Activated naive CD4-positive, alpha-beta T cell treated with anti-CD3 and anti-CD28 coated beads for 36 hours (primary cell): ENCODE measurements at regions of chr9 and their contacts with region 1.

Region 1: GRCh38 chr9:72364679-72365524 is at the start of gene ZFAND5:
- DNase-seq: peak; percentile 94
- H3K4me3 Mint-ChIP-seq: peak within 1 kb of the TSS; percentile 82
- H3K27ac Mint-ChIP-seq: peak within 1 kb of the TSS; percentile 95
- H3K4me1 Mint-ChIP-seq: peaks cover 31% of the 10 kb centered on the region
- H3K27me3 Mint-ChIP-seq: no peaks in the 10 kb centered on the region
- total RNA-seq, gene ZFAND5: 71.9 to 73.2 TPM

Region 2: GRCh38 chr9:71795097-71795813 is 569.6 kb before region 1 on chr9:
- CTCF ChIA-PET with region 1: no interaction called
- intact Hi-C with region 1: loop called (anchors 2 kb)
- DNase-seq: no peak
- H3K4me3 Mint-ChIP-seq: no peak overlapping the region
- H3K27ac Mint-ChIP-seq: peak overlapping the region; percentile 72
- H3K4me1 Mint-ChIP-seq: peaks cover 61% of the 10 kb centered on the region
- H3K27me3 Mint-ChIP-seq: no peaks in the 10 kb centered on the region

Region 3: DNA sequence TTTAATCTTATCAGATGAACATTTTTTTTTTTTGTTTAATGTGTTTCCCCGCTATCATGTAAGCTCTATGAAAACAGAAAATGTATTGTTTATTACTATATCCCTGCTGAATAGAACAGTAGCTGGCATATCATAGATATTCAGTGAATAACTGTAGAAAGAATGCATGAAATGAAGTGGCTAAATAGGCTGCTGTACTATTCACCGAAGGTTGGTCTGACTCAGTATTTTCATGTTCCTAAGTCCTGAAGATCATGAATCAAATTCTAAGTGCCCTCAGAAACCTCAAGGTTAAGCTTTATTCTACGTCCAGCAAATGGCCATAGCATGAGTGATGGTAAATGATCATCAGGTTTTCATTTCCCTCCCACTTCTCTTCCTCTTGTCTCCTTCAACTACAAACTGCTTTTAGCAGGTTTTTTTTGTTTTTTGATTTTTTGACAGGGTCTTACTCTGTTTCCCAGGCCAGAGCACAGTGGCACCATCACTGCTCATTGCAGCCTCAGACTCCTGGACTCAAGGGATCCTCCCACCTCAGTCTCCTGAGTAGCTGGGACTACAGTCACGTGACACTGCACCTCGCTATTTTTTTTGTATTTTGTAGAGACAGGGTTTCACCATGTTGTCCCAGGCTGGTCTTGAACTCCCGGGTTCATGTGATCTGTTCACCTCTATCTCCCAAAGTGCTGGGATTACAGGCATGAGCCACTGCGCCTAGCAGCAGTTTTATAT is 19.2 kb after region 1 on chr9:
- CTCF ChIA-PET with region 1: no interaction called
- intact Hi-C with region 1: loop called (anchors 1 kb)
- DNase-seq: no peak
- H3K4me3 Mint-ChIP-seq: no peak overlapping the region
- H3K27ac Mint-ChIP-seq: no peak overlapping the region
- H3K4me1 Mint-ChIP-seq: peaks cover 6% of the 10 kb centered on the region
- H3K27me3 Mint-ChIP-seq: no peaks in the 10 kb centered on the region

Region 4: GRCh38 chr9:72473474-72474261 is 108.8 kb after region 1 on chr9:
- CTCF ChIA-PET with region 1: no interaction called
- intact Hi-C with region 1: loop called (anchors 1 kb)
- DNase-seq: no peak
- H3K4me3 Mint-ChIP-seq: no peak overlapping the region
- H3K27ac Mint-ChIP-seq: peak overlapping the region; percentile 84
- H3K4me1 Mint-ChIP-seq: peaks cover 42% of the 10 kb centered on the region
- H3K27me3 Mint-ChIP-seq: no peaks in the 10 kb centered on the region

Region 5: DNA sequence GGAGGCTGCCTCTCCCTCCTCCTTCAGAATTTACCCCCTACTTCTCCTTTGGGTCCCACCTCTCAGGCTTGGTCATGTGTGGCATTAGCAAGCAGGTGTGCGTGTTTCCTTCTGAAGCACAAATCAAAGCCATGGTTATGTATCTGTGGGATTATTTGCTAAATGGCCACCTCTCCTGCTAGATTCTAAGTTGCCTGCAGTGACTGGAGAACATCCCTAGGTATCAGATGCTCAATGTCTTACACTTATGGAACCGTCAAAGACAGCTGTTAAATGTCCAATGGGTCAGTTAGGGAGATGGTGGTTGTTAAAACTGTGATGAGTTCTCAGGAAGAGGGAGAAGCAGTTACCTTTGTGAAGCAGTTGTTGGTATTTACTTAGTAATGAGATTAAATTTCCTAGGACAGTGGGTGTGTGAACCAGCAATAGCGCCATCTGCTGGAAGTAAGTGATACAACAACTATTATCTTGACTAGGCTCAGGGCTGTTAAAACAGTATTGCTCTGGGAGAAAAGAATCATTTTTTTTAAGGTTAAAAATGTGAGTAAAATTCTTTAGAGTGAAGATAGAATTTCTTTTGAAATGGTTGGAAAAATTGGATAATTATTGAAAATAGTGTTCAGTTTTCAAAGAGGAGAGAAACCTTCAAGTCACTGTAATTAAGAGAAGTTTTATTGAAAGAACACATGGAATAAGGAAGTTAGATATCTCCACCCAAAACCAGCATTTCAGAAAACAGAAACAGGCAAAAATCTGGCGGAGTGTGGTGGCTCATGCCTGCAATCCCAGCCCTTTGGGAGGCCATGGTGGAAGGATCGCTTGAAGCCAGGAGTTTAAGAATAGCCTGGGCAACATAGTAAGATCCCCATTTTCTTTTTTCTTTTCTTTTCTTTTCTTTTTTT is 227.9 kb after region 1 on chr9:
- CTCF ChIA-PET with region 1: interaction called, 3 read pairs
- intact Hi-C with region 1: loop called (anchors 1 kb)
- DNase-seq: peak; percentile 41
- H3K4me3 Mint-ChIP-seq: no peak overlapping the region
- H3K27ac Mint-ChIP-seq: no peak overlapping the region
- H3K4me1 Mint-ChIP-seq: peaks cover 6% of the 10 kb centered on the region
- H3K27me3 Mint-ChIP-seq: no peaks in the 10 kb centered on the region

Region 6: DNA sequence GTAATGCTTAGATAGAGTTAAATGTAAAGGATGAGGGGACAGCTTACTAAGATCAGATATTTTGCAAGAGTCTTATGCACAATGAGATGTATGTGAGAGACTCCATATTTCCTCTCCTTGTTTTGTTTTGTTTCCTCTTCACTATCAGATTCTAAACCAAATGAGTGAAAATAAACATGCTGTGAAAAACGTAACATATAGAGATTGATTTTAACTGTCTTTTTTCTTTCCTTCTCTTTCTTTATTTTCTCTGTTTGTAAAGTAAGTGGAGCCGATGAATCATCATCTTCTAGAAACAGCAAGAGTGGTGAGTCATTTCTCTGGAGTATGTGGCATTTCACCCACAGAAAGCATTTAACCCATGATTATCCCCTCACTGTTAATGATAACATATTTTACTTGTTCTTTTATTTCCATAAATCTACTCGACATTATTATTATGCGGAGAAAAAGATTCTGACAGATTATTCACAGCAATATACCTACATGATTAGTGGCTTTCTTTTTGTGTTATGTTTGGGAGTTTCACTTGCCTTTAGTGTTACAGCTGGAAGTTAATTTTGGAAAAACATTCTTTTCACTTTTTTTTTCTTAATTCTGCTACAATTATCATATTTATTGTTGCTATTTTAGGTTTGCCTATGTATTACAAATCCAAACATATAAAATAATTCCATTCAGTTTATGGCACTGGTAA is 784.6 kb after region 1 on chr9:
- CTCF ChIA-PET with region 1: no interaction called
- intact Hi-C with region 1: loop called (anchors 2 kb)
- DNase-seq: peak; percentile 23
- H3K4me3 Mint-ChIP-seq: peak overlapping the region; percentile 28
- H3K27ac Mint-ChIP-seq: peak overlapping the region; percentile 79
- H3K4me1 Mint-ChIP-seq: peaks cover 55% of the 10 kb centered on the region
- H3K27me3 Mint-ChIP-seq: no peaks in the 10 kb centered on the region